ENCODE measurements at regions of chr7 and their contacts with region 1.

Region 1: GRCh38 chr7:87219545-87220025 is at the start of gene TMEM243:
- DNase-seq: peak; percentile 94
- total RNA-seq, gene TMEM243: 5.9 TPM

Region 2: DNA sequence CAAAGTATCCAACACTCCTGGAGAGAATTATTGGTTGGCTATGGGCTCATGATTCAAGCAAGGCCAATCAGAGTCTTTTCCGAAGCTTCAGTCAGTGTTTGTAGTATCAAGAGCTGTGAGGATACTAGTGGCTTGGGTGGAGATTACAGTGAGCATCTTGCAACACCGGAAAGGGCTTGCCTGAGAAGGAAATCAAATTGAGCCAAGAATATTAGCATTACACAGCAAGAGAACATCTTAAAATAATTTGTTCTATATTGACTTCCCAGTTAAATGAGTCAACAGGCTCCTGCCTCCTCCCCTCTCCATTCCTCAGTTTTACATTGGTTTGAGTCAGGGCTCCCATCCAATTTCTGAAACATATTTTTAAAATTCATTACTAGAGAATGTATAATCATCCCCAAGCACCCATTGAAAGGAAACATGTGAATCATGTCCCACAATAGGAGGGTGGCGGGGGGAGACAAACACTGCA is 287.5 kb before region 1 on chr7:
- intact Hi-C with region 1: loop called (anchors 5 kb)
- DNase-seq: no peak

Region 3: GRCh38 chr7:87059525-87060287 is 159.9 kb before region 1 on chr7 and contains the start of gene ELAPOR2:
- intact Hi-C with region 1: loop called (anchors 5 kb)
- DNase-seq: peak; percentile 86
- total RNA-seq, gene ELAPOR2: 8.9 TPM

Region 4: DNA sequence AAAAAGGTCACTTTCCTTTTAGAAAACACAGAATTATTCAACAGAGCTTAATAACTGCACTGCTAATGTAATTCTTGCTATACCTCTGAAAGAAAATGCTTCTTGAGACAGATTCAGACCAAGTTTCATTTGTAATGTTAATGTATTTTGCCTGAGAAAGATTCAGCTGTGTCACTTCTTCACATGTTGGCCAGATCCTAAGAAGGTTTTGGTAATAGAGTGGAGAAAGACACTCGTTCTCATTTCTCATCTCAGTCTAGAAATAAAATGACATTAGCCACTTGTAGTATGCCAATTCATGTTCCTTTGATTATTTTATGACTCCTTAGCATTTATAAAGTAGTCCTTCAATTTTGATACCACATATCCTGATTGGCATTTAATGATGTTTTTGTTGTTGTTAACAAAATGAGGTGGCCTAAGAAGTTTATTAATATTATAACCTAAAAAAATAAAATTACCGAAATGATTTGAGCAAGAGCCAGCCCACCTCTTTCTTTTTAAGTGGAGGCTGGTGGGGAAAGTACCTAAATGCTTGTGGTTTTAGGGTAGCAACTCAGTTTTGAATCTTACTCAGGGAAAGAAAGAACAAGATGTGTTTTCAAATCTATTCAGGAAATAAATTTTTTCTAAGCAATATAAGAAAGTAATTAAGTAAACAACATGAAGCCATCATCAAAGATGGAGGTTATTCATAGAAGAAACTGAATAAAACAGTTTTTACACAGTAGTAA is 143.7 kb before region 1 on chr7:
- intact Hi-C with region 1: no loop called
- DNase-seq: no peak